SK-N-SH (cell line): ENCODE measurements at regions of chr2 and their contacts with region 1.

Region 1: GRCh38 chr2:20446917-20447436 is at the start of gene RHOB:
- DNase-seq: peak; percentile 100
- H3K4me3 ChIP-seq: peak within 1 kb of the TSS; percentile 82 to 92
- H3K27ac ChIP-seq: peak within 1 kb of the TSS; percentile 82 to 96
- H3K4me1 ChIP-seq: peaks cover 32 to 47% of the 10 kb centered on the region in 2 experiments
- H3K27me3 ChIP-seq: no peaks in the 10 kb centered on the region
- CTCF ChIP-seq: no peak
- EP300 ChIP-seq: peak; percentile 37 to 66; a peak in 3 of 4 replicates
- RAD21 ChIP-seq: peak; percentile 46
- polyA plus RNA-seq, gene RHOB: 43.5 and 50.3 TPM in 2 replicates

Region 2: GRCh38 chr2:20362701-20363442 is 84.1 kb before region 1 on chr2:
- CTCF ChIA-PET with region 1: no interaction called
- POLR2A ChIA-PET with region 1: no interaction called
- DNase-seq: no peak
- H3K4me3 ChIP-seq: no peak overlapping the region
- H3K27ac ChIP-seq: no peak overlapping the region
- H3K4me1 ChIP-seq: peaks cover 0 to 9% of the 10 kb centered on the region in 2 experiments; a peak in 1 of 4 replicates
- H3K27me3 ChIP-seq: no peaks in the 10 kb centered on the region
- CTCF ChIP-seq: no peak
- EP300 ChIP-seq: no peak
- RAD21 ChIP-seq: no peak

Region 3: GRCh38 chr2:20424300-20425290 is 22.4 kb before region 1 on chr2:
- CTCF ChIA-PET with region 1: interaction called, 12 read pairs
- POLR2A ChIA-PET with region 1: interaction called, 8 read pairs
- DNase-seq: peak; percentile 57
- H3K4me3 ChIP-seq: 0 out of 4 replicates have a peak overlapping the region, but pooled peaks of 1 of the 2 experiments have one; percentile 3
- H3K27ac ChIP-seq: peak overlapping the region; percentile 3 to 57; a peak in 3 of 4 replicates
- H3K4me1 ChIP-seq: peaks cover 25 to 32% of the 10 kb centered on the region in 2 experiments
- H3K27me3 ChIP-seq: no peaks in the 10 kb centered on the region
- CTCF ChIP-seq: no peak
- EP300 ChIP-seq: peak; percentile 35 to 78; a peak in 3 of 4 replicates
- RAD21 ChIP-seq: no peak

Region 4: GRCh38 chr2:20496081-20496876 is 49.3 kb after region 1 on chr2:
- CTCF ChIA-PET with region 1: interaction called, 10 read pairs
- POLR2A ChIA-PET with region 1: interaction called, 16 read pairs
- DNase-seq: no peak
- H3K4me3 ChIP-seq: no peak overlapping the region
- H3K27ac ChIP-seq: no peak overlapping the region
- H3K4me1 ChIP-seq: peaks cover 19 to 25% of the 10 kb centered on the region in 2 experiments
- H3K27me3 ChIP-seq: no peaks in the 10 kb centered on the region
- CTCF ChIP-seq: no peak
- EP300 ChIP-seq: no peak
- RAD21 ChIP-seq: no peak

Region 5: DNA sequence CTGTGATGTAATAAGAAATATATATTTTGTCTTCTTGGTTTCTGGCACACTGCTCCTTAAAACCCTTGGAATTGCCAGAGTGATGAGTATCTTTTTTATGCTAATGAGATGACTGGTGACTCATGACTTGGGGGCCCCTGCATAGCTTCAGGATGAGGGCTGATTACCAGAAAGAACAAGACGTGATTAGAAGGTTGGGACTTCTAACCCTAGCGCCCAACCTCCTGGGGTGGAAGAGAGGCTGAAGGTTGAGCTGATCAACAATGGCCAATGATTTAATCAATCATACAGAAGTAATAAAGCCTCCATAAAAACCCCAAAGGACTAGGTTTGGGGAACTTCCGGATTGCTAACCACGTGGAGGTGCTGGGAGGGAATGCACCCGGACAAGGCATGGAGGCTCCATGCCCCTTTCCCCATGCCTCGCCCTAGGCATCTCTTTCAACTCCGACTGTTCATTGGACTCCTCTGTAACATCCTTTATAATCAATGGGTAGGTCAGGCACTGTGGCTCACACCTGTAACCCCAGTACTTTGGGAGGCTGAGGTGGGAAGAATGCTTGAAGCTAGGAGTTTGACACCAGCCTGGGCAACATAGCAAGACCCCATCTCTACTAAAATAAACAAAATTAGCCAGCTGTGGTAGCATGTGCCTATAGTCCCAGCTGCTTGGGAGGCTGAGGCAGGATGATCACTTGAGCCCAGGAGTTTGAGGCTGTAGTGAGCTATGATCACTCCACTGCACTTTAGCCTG is 114.9 kb after region 1 on chr2:
- CTCF ChIA-PET with region 1: interaction called, 7 read pairs
- POLR2A ChIA-PET with region 1: interaction called, 19 read pairs
- DNase-seq: no peak
- H3K4me3 ChIP-seq: no peak overlapping the region
- H3K27ac ChIP-seq: peak overlapping the region in 1 of 2 experiments; percentile 41; a peak in 1 of 4 replicates
- H3K4me1 ChIP-seq: peaks cover 30 to 52% of the 10 kb centered on the region in 2 experiments; a peak in 3 of 4 replicates
- H3K27me3 ChIP-seq: no peaks in the 10 kb centered on the region
- CTCF ChIP-seq: no peak
- EP300 ChIP-seq: peak in 1 of 2 experiments; percentile 83; a peak in 1 of 4 replicates
- RAD21 ChIP-seq: no peak

Region 6: GRCh38 chr2:20600756-20601325 is 153.9 kb after region 1 on chr2:
- CTCF ChIA-PET with region 1: interaction called, 16 read pairs
- POLR2A ChIA-PET with region 1: interaction called, 47 read pairs
- DNase-seq: no peak
- H3K4me3 ChIP-seq: no peak overlapping the region
- H3K27ac ChIP-seq: no peak overlapping the region
- H3K4me1 ChIP-seq: peaks cover 21 to 28% of the 10 kb centered on the region in 2 experiments; a peak in 2 of 4 replicates
- H3K27me3 ChIP-seq: no peaks in the 10 kb centered on the region
- CTCF ChIP-seq: peak; percentile 67
- EP300 ChIP-seq: no peak
- RAD21 ChIP-seq: peak; percentile 50; the same call in 1 of the 2 replicates

Region 7: GRCh38 chr2:20635675-20636584 is 189.0 kb after region 1 on chr2:
- CTCF ChIA-PET with region 1: interaction called, 188 read pairs
- POLR2A ChIA-PET with region 1: interaction called, 90 read pairs
- DNase-seq: peak; percentile 98
- H3K4me3 ChIP-seq: peak overlapping the region in 1 of 2 experiments; percentile 27; a peak in 1 of 4 replicates
- H3K27ac ChIP-seq: peak overlapping the region; percentile 9 to 72; a peak in 3 of 4 replicates
- H3K4me1 ChIP-seq: peaks cover 16 to 21% of the 10 kb centered on the region in 2 experiments
- H3K27me3 ChIP-seq: no peaks in the 10 kb centered on the region
- CTCF ChIP-seq: peak; percentile 98
- EP300 ChIP-seq: peak in 1 of 2 experiments; percentile 37; a peak in 2 of 4 replicates
- RAD21 ChIP-seq: peak; percentile 100